Caco-2 (cell line): ENCODE measurements at regions of chr1 and their contacts with region 1.

Region 1: GRCh38 chr1:217889401-217889800 is 258.3 kb downstream of the SPATA17 start:
- DNase-seq: peak; percentile 42 to 43
- H3K4me3 ChIP-seq: no peak overlapping the region
- H3K4me3 Mint-ChIP-seq: no peak overlapping the region
- H3K27ac Mint-ChIP-seq: no peak overlapping the region
- H3K4me1 ChIP-seq: no peaks in the 10 kb centered on the region
- H3K4me1 Mint-ChIP-seq: no peaks in the 10 kb centered on the region
- H3K27me3 ChIP-seq: no peaks in the 10 kb centered on the region
- H3K27me3 Mint-ChIP-seq: peaks cover 8% of the 10 kb centered on the region
- CTCF ChIP-seq: peak; percentile 45 to 47

Region 2: GRCh38 chr1:217703326-217703725 is 186.1 kb before region 1 on chr1:
- CTCF ChIA-PET with region 1: no interaction called
- POLR2A ChIA-PET with region 1: no interaction called
- intact Hi-C with region 1: no loop called
- DNase-seq: no peak
- H3K4me3 ChIP-seq: no peak overlapping the region
- H3K4me3 Mint-ChIP-seq: no peak overlapping the region
- H3K27ac Mint-ChIP-seq: no peak overlapping the region
- H3K4me1 ChIP-seq: no peaks in the 10 kb centered on the region
- H3K4me1 Mint-ChIP-seq: no peaks in the 10 kb centered on the region
- H3K27me3 ChIP-seq: no peaks in the 10 kb centered on the region
- H3K27me3 Mint-ChIP-seq: peaks cover 3% of the 10 kb centered on the region
- CTCF ChIP-seq: no peak

Region 3: DNA sequence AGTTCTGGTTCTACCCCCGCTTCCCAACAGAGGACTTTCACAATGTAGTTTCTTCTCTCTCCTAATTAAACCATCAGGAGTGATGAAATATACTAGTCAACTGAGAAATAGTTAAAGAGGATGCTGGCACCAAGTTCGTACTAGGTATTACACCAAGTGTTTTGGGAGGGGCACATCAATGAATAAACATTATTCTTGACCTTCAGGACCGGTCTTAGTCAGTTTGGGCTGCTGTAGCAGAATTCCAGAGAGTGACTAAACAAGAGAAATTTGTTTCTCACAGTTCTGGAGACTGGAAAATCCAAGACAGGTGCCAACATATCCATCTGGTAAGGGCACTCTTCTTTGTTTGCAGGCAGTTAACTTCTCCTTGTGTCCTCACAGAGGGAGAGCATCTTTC is 154.4 kb before region 1 on chr1:
- CTCF ChIA-PET with region 1: no interaction called
- POLR2A ChIA-PET with region 1: no interaction called
- intact Hi-C with region 1: no loop called
- DNase-seq: no peak
- H3K4me3 ChIP-seq: no peak overlapping the region
- H3K4me3 Mint-ChIP-seq: no peak overlapping the region
- H3K27ac Mint-ChIP-seq: no peak overlapping the region
- H3K4me1 ChIP-seq: no peaks in the 10 kb centered on the region
- H3K4me1 Mint-ChIP-seq: no peaks in the 10 kb centered on the region
- H3K27me3 ChIP-seq: no peaks in the 10 kb centered on the region
- H3K27me3 Mint-ChIP-seq: no peaks in the 10 kb centered on the region
- CTCF ChIP-seq: no peak

Region 4: DNA sequence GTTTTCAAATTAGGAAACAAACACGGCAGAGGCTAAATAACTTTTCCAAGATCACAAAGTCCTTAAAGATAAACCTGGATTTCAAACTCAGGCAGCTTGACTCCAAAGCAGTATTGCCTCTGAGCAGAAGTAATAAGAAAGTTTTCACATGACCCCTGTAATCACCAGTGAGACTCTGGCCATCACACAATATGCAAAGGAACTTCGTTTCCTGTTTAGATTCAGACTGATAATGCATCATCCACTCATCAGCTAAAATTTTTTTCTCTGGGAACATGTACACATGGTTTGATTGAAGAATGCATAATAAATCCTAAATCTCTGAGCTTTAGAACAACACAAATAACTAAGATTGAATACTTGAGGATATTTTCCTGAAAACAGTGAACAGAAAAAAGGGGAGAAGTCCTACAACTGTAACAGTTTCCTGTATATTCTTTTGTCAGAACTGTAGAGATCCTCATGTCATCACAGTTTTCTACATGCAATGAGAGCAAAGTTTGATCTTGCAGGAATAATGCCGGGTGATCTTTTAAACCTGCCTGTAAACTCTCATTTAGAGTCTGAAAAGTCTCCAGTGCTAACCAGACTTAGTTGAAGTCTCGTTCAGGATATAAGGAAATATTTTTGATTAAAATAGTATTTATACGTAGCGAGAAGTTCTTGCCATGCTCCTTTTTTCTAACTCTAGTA is 32.9 kb before region 1 on chr1:
- CTCF ChIA-PET with region 1: no interaction called
- POLR2A ChIA-PET with region 1: no interaction called
- intact Hi-C with region 1: no loop called
- DNase-seq: no peak
- H3K4me3 ChIP-seq: no peak overlapping the region
- H3K4me3 Mint-ChIP-seq: no peak overlapping the region
- H3K27ac Mint-ChIP-seq: no peak overlapping the region
- H3K4me1 ChIP-seq: no peaks in the 10 kb centered on the region
- H3K4me1 Mint-ChIP-seq: no peaks in the 10 kb centered on the region
- H3K27me3 ChIP-seq: no peaks in the 10 kb centered on the region
- H3K27me3 Mint-ChIP-seq: no peaks in the 10 kb centered on the region
- CTCF ChIP-seq: no peak

Region 5: GRCh38 chr1:218164111-218164929 is 274.9 kb after region 1 on chr1:
- CTCF ChIA-PET with region 1: no interaction called
- POLR2A ChIA-PET with region 1: no interaction called
- intact Hi-C with region 1: loop called (anchors 1 kb)
- DNase-seq: peak in 1 of 2 experiments; percentile 35
- H3K4me3 ChIP-seq: peak overlapping the region; percentile 37
- H3K4me3 Mint-ChIP-seq: peak overlapping the region; percentile 77
- H3K27ac Mint-ChIP-seq: no peak overlapping the region
- H3K4me1 ChIP-seq: no peaks in the 10 kb centered on the region
- H3K4me1 Mint-ChIP-seq: peaks cover 13% of the 10 kb centered on the region
- H3K27me3 ChIP-seq: 0 out of 2 replicates have a peak, but pooled peaks cover 2% of the 10 kb centered on the region
- H3K27me3 Mint-ChIP-seq: peaks cover 33% of the 10 kb centered on the region
- CTCF ChIP-seq: no peak

Region 6: GRCh38 chr1:218171285-218171893 is 282.0 kb after region 1 on chr1:
- CTCF ChIA-PET with region 1: no interaction called
- POLR2A ChIA-PET with region 1: no interaction called
- intact Hi-C with region 1: loop called (anchors 1 kb)
- DNase-seq: peak in 1 of 2 experiments; percentile 17
- H3K4me3 ChIP-seq: no peak overlapping the region
- H3K4me3 Mint-ChIP-seq: no peak overlapping the region
- H3K27ac Mint-ChIP-seq: no peak overlapping the region
- H3K4me1 ChIP-seq: no peaks in the 10 kb centered on the region
- H3K4me1 Mint-ChIP-seq: no peaks in the 10 kb centered on the region
- H3K27me3 ChIP-seq: no peaks in the 10 kb centered on the region; the same call in 1 of the 2 replicates
- H3K27me3 Mint-ChIP-seq: peaks cover 15% of the 10 kb centered on the region
- CTCF ChIP-seq: peak; percentile 74